ENCODE measurements at regions of chr12 and their contacts with region 1.

Region 1: DNA sequence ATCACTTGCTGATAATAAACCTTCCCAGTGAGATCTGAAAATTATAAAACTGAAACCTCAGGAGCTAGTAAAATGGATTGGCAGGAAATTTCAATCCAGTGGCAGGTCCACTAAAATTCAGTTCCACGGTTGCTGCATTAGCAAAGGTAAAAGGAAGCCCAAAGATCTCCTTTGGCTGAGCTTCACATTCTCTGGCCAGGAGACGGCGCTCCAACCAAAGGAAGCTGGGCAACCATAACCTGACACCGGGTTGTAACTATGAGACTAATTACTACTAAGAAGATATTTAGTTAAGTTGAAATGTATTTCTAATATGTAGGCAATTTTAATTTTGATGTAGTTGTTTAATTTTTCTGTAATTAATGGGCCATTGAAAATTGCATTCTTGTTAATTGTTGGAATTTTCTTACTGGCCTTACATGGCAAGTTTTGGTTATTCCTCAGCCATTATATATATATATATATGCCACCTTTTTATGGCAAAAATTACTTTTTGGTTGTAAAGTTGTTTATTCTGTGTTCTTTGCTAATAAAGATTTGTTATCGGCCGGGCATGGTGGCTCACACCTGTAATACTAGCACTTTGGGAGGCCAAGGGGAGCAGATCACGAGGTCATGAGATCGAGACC is 17.0 kb downstream of the OR8S1 start:
- DNase-seq: peak; percentile 50 to 74 (median 54)
- ATAC-seq: peak; percentile 90
- H3K4me3 ChIP-seq: no peak overlapping the region
- H3K27ac ChIP-seq: no peak overlapping the region
- H3K4me1 ChIP-seq: peaks cover 0 to 4% of the 10 kb centered on the region in 2 experiments; a peak in 2 of 5 replicates
- H3K27me3 ChIP-seq: no peaks in the 10 kb centered on the region
- CTCF ChIP-seq: peak; percentile 88 to 96 (median 93)
- EP300 ChIP-seq: no peak
- POLR2A ChIP-seq: no peak
- RAD21 ChIP-seq: peak; percentile 99

Region 2: GRCh38 chr12:48221645-48222044 is 320.8 kb before region 1 on chr12:
- CTCF ChIA-PET with region 1: no interaction called
- POLR2A ChIA-PET with region 1: no interaction called
- in situ Hi-C with region 1: no loop called
- intact Hi-C with region 1: no loop called
- DNase-seq: no peak
- ATAC-seq: peak; percentile 61
- H3K4me3 ChIP-seq: no peak overlapping the region
- H3K27ac ChIP-seq: no peak overlapping the region
- H3K4me1 ChIP-seq: no peaks in the 10 kb centered on the region
- H3K27me3 ChIP-seq: no peaks in the 10 kb centered on the region; a peak in 1 of 5 replicates
- CTCF ChIP-seq: no peak
- EP300 ChIP-seq: no peak
- POLR2A ChIP-seq: no peak
- RAD21 ChIP-seq: no peak

Region 3: DNA sequence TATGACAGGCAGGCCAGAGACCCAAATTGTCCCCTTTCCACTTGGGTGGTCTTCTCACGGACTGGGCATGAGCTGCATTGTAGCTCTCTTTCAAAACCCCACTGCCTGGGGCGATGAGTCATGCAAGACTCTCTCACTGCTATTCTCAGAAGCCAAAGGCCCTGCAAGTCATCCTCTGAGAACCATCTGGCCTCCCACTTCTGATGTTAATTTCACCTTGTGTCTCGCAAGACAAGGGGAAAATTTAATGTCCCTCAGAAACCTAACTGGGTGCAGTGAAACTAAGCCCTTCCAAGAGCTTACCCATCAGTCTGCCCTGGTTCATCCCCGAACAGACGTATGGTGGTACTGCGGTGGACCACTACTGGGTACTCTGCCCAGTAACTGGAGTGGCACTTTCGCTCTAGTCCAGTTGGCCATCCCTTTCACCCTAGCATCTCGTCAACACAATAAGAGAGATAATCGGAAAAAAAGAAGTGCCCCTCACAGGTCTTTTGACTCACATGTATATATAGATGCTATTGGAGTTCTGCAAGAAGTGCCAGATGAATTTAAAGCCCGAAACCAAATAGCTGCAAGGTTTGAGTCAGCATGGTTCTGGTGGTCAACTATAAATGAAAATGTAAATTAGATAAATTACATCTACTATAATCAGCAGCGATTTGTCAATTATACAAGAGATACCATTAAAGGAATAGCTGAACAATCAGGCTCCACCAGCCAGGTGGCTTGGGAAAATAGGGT is 58.8 kb after region 1 on chr12:
- CTCF ChIA-PET with region 1: no interaction called
- POLR2A ChIA-PET with region 1: no interaction called
- in situ Hi-C with region 1: no loop called
- intact Hi-C with region 1: loop called (anchors 5 kb)
- DNase-seq: peak in 3 of 4 experiments; percentile 18 to 62 (median 55)
- ATAC-seq: peak; percentile 84
- H3K4me3 ChIP-seq: no peak overlapping the region
- H3K27ac ChIP-seq: peak overlapping the region; percentile 27; the same call in 2 of the 3 replicates
- H3K4me1 ChIP-seq: peaks cover 0 to 15% of the 10 kb centered on the region in 2 experiments; a peak in 2 of 5 replicates
- H3K27me3 ChIP-seq: peaks cover 0 to 2% of the 10 kb centered on the region in 2 experiments; a peak in 1 of 5 replicates
- CTCF ChIP-seq: no peak
- EP300 ChIP-seq: peak; percentile 52; the same call in 1 of the 2 replicates
- POLR2A ChIP-seq: no peak
- RAD21 ChIP-seq: no peak

Region 4: GRCh38 chr12:48618541-48618940 is 76.1 kb after region 1 on chr12:
- CTCF ChIA-PET with region 1: interaction called, 91 read pairs
- POLR2A ChIA-PET with region 1: interaction called, 3 read pairs
- in situ Hi-C with region 1: loop called (anchors 5 kb)
- intact Hi-C with region 1: loop called (anchors 1 kb)
- DNase-seq: peak; percentile 69 to 83 (median 78)
- ATAC-seq: peak; percentile 99
- H3K4me3 ChIP-seq: no peak overlapping the region
- H3K27ac ChIP-seq: no peak overlapping the region
- H3K4me1 ChIP-seq: no peaks in the 10 kb centered on the region; a peak in 2 of 5 replicates
- H3K27me3 ChIP-seq: no peaks in the 10 kb centered on the region
- CTCF ChIP-seq: peak; percentile 93 to 97 (median 96)
- EP300 ChIP-seq: no peak
- POLR2A ChIP-seq: no peak
- RAD21 ChIP-seq: peak; percentile 98 to 99